ENCODE measurements at regions of chr14 and their contacts with region 1.

Region 1: GRCh38 chr14:65412032-65412846 is at the start of gene FUT8:
- DNase-seq: peak; percentile 97 to 99 (median 99)
- ATAC-seq: peak; percentile 97 to 98
- H3K4me3 ChIP-seq: peak within 1 kb of the TSS; percentile 89
- H3K27ac ChIP-seq: peak within 1 kb of the TSS; percentile 93
- H3K4me1 ChIP-seq: no peaks in the 10 kb centered on the region
- H3K27me3 ChIP-seq: no peaks in the 10 kb centered on the region
- total RNA-seq, gene FUT8: 12.0 to 16.9 (median 15.0) TPM

Region 2: DNA sequence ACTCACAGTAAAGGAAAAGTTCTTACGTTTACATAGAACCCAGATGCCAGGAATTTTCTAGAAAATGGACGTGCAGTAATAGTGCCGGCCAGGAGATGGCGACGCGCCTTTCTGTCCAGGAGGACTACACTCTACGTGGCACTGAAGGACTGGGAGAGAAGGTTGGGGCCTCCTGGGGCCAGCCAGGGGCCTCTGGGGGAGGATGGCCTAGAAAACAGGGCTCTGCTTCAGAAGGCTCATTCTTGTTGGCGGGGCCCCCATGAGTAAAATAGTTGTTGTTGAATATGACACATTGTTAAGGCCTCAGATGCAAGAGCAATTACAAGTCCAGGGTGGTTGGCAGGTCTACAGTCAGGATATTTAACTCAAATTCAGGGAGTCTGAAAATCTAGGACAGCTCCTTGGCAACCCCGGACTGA is 189.8 kb before region 1 on chr14:
- intact Hi-C with region 1: loop called in 2 of 4 experiments (anchors 2 to 10 kb)
- DNase-seq: peak in 2 of 3 donors; percentile 53 to 79
- ATAC-seq: peak; percentile 78 to 82
- H3K4me3 ChIP-seq: no peak overlapping the region
- H3K27ac ChIP-seq: no peak overlapping the region
- H3K4me1 ChIP-seq: peaks cover 4% of the 10 kb centered on the region
- H3K27me3 ChIP-seq: no peaks in the 10 kb centered on the region

Region 3: DNA sequence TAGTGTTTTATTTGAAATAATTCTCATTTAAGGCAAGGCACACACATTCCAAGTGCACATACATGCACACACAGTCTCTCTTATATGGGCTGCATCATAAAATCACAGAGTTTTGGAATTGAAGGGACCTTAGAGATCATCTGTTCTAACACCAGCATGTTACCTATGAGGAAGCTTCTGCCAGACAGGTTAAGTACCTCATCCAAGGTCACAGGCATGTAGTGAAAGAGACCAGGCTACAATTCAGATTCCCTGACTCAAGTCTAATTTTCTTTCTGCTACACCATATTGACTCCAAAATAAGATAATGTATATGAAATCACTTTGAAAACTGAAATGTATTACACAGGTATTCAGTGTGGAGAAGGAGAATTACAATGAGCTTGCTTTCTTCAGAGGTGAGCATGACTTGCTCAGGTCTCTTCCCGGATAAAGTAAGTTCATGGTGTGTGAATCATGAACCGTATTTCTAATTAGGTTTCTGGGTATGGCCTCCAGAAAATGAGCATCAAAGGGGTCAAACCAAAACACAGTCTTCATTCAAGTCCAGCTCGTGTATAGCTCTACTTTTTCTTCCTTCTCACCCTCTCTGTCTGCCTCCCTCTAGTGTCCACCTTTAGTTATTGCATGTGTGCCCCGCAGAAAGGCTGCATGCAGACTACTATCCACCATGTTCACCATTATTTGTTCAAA is 412.2 kb after region 1 on chr14:
- intact Hi-C with region 1: loop called in 3 of 4 experiments (anchors 5 to 10 kb)
- DNase-seq: peak in 1 of 3 donors; percentile 20
- ATAC-seq: peak; percentile 65 to 78
- H3K4me3 ChIP-seq: no peak overlapping the region
- H3K27ac ChIP-seq: no peak overlapping the region
- H3K4me1 ChIP-seq: no peaks in the 10 kb centered on the region
- H3K27me3 ChIP-seq: no peaks in the 10 kb centered on the region

Region 4: DNA sequence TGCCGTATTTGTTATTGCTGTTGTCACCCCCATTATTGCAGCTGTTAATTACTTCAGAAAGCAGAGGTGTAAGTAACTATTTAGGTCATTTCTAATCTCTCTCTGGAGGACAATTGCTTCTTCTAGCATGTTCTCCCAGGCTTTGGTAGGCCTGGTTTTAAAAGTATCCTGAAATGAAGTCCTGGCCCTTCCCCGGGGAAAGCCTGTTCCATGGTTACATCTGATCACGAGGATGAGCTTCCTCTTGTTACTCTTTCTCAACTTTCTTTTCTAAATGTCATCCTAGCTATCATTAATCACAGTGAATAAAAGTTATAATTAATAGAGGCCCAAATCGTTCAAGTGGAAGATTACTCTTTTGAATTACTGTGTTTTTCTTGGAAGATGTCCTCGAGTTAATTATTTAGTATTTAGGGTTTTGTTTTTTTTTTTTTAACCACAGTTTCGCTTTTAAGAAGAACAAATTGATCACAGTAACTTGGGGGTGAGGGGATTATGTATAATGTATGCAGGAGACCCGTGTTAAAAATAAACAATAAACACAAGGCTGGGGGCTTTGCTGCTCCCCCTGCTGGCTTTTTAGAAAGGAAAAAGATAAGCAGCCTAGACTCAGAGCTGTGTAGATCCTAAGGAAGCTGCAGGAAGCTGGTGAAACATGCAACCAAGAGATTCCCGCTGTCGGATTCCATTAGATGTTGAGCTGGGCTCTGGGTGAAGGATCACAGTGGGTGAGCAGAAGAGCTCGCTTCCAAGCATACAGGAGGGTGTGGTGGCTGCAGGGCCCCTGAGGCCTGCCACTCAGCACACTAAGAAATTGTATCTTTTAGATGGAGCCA is 420.4 kb after region 1 on chr14:
- intact Hi-C with region 1: loop called in 3 of 4 experiments (anchors 2 to 10 kb)
- DNase-seq: no peak
- ATAC-seq: peak in 1 of 2 donors; percentile 12
- H3K4me3 ChIP-seq: no peak overlapping the region
- H3K27ac ChIP-seq: no peak overlapping the region
- H3K4me1 ChIP-seq: no peaks in the 10 kb centered on the region
- H3K27me3 ChIP-seq: no peaks in the 10 kb centered on the region

Region 5: DNA sequence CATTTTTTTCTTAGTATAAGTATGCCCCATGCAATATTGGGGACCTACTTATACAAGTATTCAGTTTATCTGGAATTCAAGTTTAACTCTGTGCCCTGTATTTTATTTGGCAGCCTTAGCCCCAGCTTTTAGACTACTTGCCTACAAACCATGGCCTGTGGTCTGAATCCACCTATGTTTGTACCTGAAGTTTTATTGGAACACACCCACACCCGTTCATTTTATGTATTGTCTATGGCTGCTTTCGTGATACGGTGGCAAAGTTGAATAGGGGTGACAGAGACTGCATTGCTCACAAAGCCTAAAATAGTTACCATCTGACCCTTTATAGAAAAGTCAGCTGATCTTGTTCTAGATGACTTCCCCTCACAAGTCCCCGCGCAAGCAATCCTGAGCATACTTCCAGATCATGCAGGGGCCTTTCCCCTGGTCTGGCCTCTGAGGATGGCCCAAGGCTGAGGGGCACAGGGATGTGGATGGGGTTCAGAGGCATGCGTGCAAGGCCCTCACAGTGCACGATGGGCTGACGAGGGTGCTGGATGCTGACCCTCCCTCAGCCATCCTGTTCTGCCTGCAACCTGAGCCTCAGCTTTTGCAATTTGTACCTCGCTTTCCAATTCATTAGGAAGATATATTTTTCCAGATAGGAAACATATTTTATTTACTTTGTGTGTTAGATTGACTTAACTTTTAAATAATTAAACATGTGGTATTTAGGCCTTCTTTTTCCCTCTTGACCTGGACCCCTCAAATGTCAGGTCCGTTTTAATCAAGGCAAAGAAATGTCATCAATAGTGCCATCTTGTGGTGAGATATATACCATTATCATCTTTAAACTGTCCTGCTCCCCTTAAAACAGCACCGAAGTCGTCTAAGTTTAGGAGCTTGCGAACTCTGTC is 546.7 kb after region 1 on chr14:
- intact Hi-C with region 1: loop called in 1 of 4 experiments (anchors 10 kb)
- DNase-seq: peak in 1 of 3 donors; percentile 52
- ATAC-seq: peak in 1 of 2 donors; percentile 47
- H3K4me3 ChIP-seq: no peak overlapping the region
- H3K27ac ChIP-seq: no peak overlapping the region
- H3K4me1 ChIP-seq: no peaks in the 10 kb centered on the region
- H3K27me3 ChIP-seq: no peaks in the 10 kb centered on the region